Aorta (tissue), 5 donors: ENCODE measurements at regions of chr1 and their contacts with region 1.

Region 1: DNA sequence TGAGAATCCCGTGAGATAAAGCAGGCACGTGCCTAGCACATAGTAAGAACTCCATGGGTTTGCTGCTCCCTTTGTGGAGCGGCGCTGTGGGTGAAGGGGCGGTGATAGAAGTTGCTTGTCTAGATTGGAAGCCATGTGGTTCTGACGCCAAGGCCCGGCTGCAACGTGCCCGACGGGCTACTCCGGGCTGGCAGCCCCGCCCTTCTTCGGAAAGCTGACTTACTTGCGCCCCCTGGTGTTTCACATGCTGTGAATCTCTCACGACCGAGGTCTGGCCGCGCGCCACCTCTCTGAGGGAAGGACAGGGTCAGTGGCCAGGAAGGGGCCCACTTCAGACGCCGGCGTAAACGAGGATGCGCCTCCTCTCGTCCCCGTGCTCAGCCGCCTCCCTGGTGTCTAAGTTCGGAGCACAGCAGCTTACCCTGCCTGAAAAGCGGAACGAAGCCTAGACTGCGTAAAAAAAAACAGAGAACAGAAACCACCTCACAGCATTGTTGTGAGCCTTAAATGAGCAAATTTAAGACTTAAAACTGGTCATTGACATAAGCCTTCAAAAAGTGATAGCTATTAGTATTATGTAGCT is 42.6 kb upstream of the WNT2B start:
- DNase-seq: peak; percentile 98
- ATAC-seq: peak; percentile 96
- H3K4me3 ChIP-seq: peak overlapping the region; percentile 38 to 63
- H3K27ac ChIP-seq: peak overlapping the region in 1 of 2 donors; percentile 60
- H3K4me1 ChIP-seq: no peaks in the 10 kb centered on the region
- H3K27me3 ChIP-seq: no peaks in the 10 kb centered on the region

Region 2: GRCh38 chr1:112063781-112064728 is 402.1 kb before region 1 on chr1:
- intact Hi-C with region 1: no loop called
- DNase-seq: no peak
- ATAC-seq: no peak
- H3K4me3 ChIP-seq: no peak overlapping the region
- H3K27ac ChIP-seq: no peak overlapping the region
- H3K4me1 ChIP-seq: no peaks in the 10 kb centered on the region
- H3K27me3 ChIP-seq: peaks cover 0 to 2% of the 10 kb centered on the region in 2 donors

Region 3: GRCh38 chr1:112390775-112391602 is 75.2 kb before region 1 on chr1:
- intact Hi-C with region 1: loop called (anchors 1 kb)
- DNase-seq: peak; percentile 92 to 93
- ATAC-seq: peak; percentile 93
- H3K4me3 ChIP-seq: peak overlapping the region; percentile 48 to 49
- H3K27ac ChIP-seq: peak overlapping the region; percentile 48 to 73
- H3K4me1 ChIP-seq: peaks cover 0 to 4% of the 10 kb centered on the region in 2 donors
- H3K27me3 ChIP-seq: no peaks in the 10 kb centered on the region

Region 4: GRCh38 chr1:112395821-112396652 is 70.1 kb before region 1 on chr1 and contains the start of gene CTTNBP2NL:
- intact Hi-C with region 1: loop called (anchors 1 kb)
- DNase-seq: peak; percentile 98
- ATAC-seq: peak; percentile 96
- H3K4me3 ChIP-seq: peak within 1 kb of the TSS; percentile 63 to 93
- H3K27ac ChIP-seq: peak within 1 kb of the TSS; percentile 91 to 100
- H3K4me1 ChIP-seq: peaks cover 4 to 7% of the 10 kb centered on the region in 2 donors
- H3K27me3 ChIP-seq: no peaks in the 10 kb centered on the region
- total RNA-seq, gene CTTNBP2NL: 59.2 to 65.8 TPM